Head of caudate nucleus (tissue), 42 donors: ENCODE measurements at regions of chr4 and their contacts with region 1.

Region 1: DNA sequence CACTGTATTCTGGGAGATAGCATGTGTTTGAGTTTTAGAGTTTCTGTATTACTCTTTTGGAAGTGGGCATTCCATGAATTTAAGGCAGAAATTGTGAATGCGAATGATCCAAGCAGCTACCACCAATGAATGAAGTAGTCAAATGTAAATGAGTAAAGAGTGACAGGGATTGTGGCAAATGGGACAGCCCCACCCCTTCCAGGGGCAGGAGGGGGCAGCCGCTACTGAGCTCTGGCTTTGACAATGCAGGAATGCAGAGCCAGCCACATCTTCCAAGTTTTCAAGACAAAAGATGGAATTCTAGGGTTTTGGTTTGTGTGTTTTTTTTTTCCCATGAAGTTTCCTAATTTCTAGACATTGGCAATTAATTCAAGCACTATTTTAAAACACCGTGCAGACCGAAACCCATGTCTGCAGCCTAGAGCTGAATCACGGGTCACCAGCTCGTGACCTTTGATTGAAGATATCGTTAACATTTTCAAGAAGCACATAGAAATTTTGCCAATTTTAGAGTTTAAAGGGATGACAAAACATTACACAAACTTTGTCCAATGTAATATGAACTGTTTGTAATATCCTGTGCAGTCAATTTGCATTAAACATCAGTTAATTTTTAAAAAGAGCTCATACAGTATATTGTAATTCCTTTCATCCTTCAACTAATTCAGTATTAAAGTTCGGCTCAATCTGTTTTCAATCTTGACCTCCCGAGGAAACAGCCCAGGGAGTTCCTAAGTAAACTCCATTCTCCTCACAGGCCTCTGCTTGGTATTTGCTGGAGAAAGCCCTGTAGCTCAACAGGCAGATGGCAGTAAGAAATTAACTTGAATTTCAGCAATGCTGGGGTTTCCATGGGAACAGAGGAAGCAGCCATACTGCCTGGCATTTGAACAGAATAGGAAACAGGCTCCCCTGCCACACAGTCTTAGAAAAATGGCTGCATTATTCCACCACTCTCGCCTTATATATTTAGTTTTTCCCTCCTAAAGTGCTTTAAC is 83.4 kb downstream of the UCHL1 start:
- DNase-seq: peak in 39 of 42 donors; percentile 10 to 87 (median 68)

Region 2: GRCh38 chr4:41647383-41647782 is 307.3 kb after region 1 on chr4:
- intact Hi-C with region 1: loop called (anchors 5 kb)
- DNase-seq: no peak

Region 3: DNA sequence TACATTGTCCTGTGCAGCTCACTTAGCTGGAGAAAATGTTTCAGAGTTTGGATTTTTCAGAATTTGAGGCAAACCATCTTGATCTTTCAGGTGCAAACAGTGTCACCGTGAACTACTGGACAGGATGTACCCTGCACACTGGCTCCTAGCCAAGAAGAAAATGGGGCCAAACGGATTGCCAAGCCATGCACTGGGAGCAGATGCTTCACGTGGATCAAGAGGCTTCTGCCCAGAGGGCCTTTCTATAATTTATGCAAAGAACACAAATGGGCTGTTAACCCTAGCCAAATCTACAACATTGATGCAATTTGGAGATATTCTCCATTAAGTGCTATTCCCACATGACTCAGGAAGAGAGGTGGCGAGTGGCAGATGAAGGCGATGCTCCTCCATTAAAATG is 1363.7 kb after region 1 on chr4:
- intact Hi-C with region 1: no loop called
- DNase-seq: peak in 1 of 42 donors; percentile 14